Activated CD8-positive, alpha-beta T cell treated with anti-CD3 and anti-CD28 coated beads for 36 hours (primary cell): ENCODE measurements at regions of chr17 and their contacts with region 1.

Region 1: GRCh38 chr17:49315551-49316257 is 46.3 kb downstream of the ZNF652 start:
- DNase-seq: peak; percentile 89
- ATAC-seq: peak; percentile 100
- H3K4me3 Mint-ChIP-seq: peak overlapping the region; percentile 47
- H3K27ac Mint-ChIP-seq: peak overlapping the region; percentile 14
- H3K4me1 Mint-ChIP-seq: peaks cover 28% of the 10 kb centered on the region
- H3K27me3 Mint-ChIP-seq: no peaks in the 10 kb centered on the region
- CTCF ChIP-seq: peak; percentile 91

Region 2: GRCh38 chr17:49327835-49328784 is 12.4 kb after region 1 on chr17:
- CTCF ChIA-PET with region 1: interaction called, 10 read pairs
- POLR2A ChIA-PET with region 1: no interaction called
- intact Hi-C with region 1: no loop called
- DNase-seq: no peak
- ATAC-seq: peak; percentile 69
- H3K4me3 Mint-ChIP-seq: no peak overlapping the region
- H3K27ac Mint-ChIP-seq: no peak overlapping the region
- H3K4me1 Mint-ChIP-seq: peaks cover 33% of the 10 kb centered on the region
- H3K27me3 Mint-ChIP-seq: no peaks in the 10 kb centered on the region
- CTCF ChIP-seq: no peak

Region 3: DNA sequence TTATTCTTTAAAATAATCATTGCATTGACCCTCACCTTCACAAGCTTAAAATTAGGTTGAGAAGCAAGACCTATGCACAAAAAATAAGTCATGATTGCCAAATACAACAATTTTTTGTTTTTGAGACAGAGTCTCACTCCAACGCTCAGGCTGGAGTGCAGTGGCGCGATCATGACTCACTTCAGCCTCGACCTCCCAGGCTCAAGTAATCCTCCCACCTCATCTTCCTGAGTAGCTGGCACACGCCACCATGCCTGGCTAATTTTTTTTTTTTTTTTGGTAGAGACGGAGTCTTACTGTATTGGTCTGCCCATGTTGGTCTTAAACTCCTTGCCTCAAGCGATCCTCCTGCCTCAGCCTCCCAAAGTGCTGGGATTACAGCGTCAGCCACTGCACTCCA is 22.2 kb after region 1 on chr17:
- CTCF ChIA-PET with region 1: interaction called, 20 read pairs
- POLR2A ChIA-PET with region 1: interaction called, 4 read pairs
- intact Hi-C with region 1: no loop called
- DNase-seq: peak; percentile 55
- ATAC-seq: peak; percentile 8
- H3K4me3 Mint-ChIP-seq: no peak overlapping the region
- H3K27ac Mint-ChIP-seq: peak overlapping the region; percentile 71
- H3K4me1 Mint-ChIP-seq: peaks cover 55% of the 10 kb centered on the region
- H3K27me3 Mint-ChIP-seq: no peaks in the 10 kb centered on the region
- CTCF ChIP-seq: no peak

Region 4: DNA sequence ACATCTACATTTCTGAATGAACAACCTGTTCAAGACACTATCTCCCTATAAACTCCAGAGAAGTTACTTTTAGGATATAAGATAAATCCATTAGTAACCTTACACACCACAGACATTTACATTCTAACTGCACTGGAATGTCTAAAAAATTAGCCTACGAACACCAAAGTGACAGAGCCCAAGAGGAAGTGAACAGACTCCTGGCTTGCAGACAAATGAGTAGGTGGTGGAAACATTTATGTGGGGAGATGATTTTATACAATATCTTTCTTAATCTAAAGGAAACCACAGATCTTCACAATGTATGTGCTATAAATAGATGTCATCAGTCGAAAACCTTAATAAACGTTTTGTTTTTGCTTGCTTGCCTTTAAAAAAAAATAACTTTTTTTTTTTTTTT is 27.6 kb after region 1 on chr17:
- CTCF ChIA-PET with region 1: interaction called, 20 read pairs
- POLR2A ChIA-PET with region 1: interaction called, 3 read pairs
- intact Hi-C with region 1: no loop called
- DNase-seq: peak; percentile 50
- ATAC-seq: peak; percentile 31
- H3K4me3 Mint-ChIP-seq: peak overlapping the region; percentile 73
- H3K27ac Mint-ChIP-seq: peak overlapping the region; percentile 94
- H3K4me1 Mint-ChIP-seq: peaks cover 73% of the 10 kb centered on the region
- H3K27me3 Mint-ChIP-seq: no peaks in the 10 kb centered on the region
- CTCF ChIP-seq: no peak

Region 5: DNA sequence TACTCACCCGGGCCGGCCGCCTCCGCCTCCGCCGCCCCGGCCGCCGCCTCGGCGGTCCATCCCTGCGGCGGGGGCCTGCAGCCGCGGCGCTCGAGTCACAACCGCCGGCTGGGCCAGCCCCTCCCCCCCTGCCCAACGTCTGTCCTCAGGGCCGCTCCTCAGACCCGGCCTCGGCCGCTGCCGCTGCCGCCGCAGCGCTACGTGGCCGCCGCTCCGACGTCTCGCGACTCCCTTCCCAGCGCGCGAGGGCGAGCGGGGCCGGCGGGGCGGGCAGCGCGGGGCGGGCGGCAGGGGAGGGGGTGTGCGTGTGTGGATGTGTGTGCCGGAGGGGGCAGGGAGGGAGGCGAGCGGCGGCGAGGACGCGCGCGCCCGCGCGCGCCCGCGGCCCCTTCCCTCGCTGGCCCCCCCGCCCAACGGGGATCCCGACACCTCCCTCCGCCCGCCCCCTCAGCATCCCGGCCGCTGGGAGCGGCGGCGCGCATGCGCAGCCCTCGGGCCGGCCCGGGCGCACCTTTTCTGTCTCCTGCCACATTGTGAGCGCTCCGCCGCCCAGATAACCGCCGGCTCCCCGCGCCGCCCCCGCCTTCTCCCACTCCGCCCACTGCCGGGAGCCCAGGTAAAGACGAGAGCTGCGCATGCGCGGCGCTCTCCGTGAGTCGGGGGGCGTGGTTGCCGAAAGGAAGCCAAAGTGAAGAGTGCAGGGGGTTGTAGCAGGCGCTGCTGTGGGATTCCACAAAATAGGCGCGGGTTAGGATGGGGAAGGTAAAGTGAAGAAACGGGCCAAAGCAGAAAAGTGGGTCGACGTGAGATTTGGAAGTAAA is 46.4 kb after region 1 on chr17 and contains the start of gene ZNF652:
- CTCF ChIA-PET with region 1: interaction called, 178 read pairs
- POLR2A ChIA-PET with region 1: interaction called, 6 read pairs
- intact Hi-C with region 1: loop called (anchors 5 kb)
- DNase-seq: peak; percentile 88
- ATAC-seq: peak; percentile 57
- H3K4me3 Mint-ChIP-seq: peak within 1 kb of the TSS; percentile 90
- H3K27ac Mint-ChIP-seq: peak within 1 kb of the TSS; percentile 93
- H3K4me1 Mint-ChIP-seq: peaks cover 58% of the 10 kb centered on the region
- H3K27me3 Mint-ChIP-seq: no peaks in the 10 kb centered on the region
- CTCF ChIP-seq: no peak
- total RNA-seq, gene ZNF652: 6.4 to 6.7 TPM

Region 6: DNA sequence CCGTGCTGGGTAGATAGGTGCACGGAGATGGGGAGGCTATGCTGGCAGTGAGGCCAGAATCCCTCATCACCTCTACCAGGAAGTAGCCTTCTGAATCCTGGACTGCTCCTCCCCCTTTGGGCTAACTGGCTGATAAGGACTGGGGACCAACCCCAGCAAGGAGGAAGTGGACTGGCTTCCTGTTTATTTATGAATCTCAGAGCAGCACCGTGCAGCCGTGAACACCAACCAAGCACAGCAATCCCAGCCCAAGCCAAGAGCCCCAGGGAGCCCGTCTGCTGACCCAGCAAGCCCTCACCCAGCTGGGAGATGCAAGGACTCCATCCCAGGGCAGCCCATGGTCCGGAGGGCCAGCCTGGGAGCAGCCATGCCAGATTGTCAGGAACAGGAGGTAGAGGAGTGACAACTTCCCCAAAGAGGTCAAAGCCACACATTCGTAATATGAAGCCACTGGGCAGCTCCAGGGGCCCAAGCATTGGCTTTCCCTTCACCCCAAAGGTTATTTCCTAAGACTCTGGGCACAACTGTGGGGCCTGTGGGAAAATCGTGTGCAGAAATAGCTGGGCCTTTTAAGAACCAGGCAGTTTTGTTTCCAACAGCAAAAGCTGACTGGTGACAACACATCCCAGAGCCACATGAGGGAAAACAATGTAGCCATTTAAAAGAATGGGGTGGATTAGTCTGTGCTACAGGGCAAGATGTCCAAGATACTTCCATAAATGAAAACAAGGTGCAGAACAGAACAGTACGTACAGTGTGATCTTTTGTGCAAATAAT is 75.0 kb after region 1 on chr17:
- CTCF ChIA-PET with region 1: interaction called, 189 read pairs
- POLR2A ChIA-PET with region 1: interaction called, 3 read pairs
- intact Hi-C with region 1: loop called (anchors 1 kb)
- DNase-seq: peak; percentile 15
- ATAC-seq: no peak
- H3K4me3 Mint-ChIP-seq: no peak overlapping the region
- H3K27ac Mint-ChIP-seq: peak overlapping the region; percentile 87
- H3K4me1 Mint-ChIP-seq: peaks cover 56% of the 10 kb centered on the region
- H3K27me3 Mint-ChIP-seq: no peaks in the 10 kb centered on the region
- CTCF ChIP-seq: no peak

Region 7: GRCh38 chr17:49443862-49444261 is 128.2 kb after region 1 on chr17:
- CTCF ChIA-PET with region 1: no interaction called
- POLR2A ChIA-PET with region 1: no interaction called
- intact Hi-C with region 1: no loop called
- DNase-seq: no peak
- ATAC-seq: no peak
- H3K4me3 Mint-ChIP-seq: no peak overlapping the region
- H3K27ac Mint-ChIP-seq: no peak overlapping the region
- H3K4me1 Mint-ChIP-seq: no peaks in the 10 kb centered on the region
- H3K27me3 Mint-ChIP-seq: peaks cover 16% of the 10 kb centered on the region
- CTCF ChIP-seq: no peak